ENCODE measurements at regions of chr2 and their contacts with region 1.

Region 1: DNA sequence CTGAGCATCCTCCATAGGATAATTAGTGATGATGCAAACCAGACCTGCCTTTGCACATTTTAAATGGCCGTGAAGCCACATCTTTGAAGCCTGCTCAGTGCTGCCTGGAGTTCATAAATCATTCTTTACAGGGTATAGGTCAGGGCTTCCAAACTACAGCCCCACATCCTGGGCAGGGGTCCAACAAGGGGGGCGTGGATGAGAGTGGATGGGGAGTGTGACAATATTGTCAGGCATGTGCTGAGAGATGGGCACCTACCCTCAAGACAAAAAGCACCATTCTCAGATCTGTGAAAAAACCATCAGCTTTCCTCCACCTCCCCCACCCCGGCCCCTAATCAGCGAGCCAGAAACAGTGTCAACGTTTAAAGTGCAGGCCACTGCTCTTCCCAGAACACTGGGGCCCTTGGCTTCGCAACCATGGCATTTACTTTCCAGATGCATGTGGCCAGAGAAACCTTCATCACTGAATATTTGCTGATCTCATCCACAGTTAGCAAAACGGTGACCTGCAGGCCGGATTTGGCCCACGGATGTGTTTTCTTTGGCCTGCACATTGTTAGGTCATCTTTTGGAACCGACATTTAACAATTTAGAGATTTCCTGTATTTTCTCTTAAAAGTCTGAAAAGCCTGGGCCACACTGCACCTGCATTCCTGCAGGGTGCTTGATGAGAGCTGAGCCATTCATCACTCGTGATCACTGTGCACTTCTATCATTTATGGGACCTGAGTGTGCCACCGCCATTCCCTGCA is 130.7 kb downstream of the ANKRD44 start:
- DNase-seq: no peak
- ATAC-seq: no peak
- H3K4me3 ChIP-seq: no peak overlapping the region
- H3K4me1 ChIP-seq: no peaks in the 10 kb centered on the region
- CTCF ChIP-seq: no peak

Region 2: DNA sequence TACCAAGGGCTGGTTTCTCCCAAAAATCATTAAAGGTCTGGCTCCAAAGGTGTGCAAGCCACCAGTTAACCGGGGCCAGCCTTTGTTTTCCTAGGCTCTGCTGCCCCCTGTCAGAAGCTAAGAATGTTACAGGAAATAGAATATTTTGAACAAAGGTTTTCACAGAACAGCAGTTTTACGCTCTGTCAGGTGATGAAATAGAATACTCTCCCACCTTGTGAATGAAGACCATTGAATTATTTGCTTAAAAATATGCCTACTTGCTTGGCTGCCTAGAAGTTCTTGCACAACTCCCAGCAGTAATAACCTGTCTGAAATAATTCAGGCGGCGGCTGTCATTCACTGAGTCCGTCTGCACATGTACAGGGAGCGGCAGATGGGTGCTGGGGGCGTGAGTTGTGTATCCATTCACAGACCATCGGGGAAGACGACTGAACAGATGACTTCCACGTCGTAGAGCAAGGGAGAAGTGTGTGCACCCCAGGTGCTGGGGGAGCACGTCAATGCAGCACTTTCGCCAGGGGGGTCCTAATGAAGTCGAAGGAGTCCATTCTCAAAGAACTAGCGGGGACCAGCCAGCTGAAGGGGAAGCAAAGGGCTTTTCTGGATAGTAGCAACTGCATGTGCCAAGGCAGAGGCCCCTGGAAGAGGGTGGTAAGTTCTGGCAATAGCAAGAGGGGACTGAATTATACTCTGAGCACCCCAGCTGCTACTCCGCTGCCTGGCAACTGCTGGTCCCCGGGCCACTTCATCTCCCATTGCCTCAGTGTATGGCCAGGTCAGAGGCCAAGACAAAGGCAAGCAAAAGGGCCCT is 198.8 kb after region 1 on chr2:
- intact Hi-C with region 1: loop called in 1 of 2 experiments (anchors 10 kb)
- DNase-seq: peak in 2 of 3 donors; percentile 42 to 60
- ATAC-seq: peak; percentile 81
- H3K4me3 ChIP-seq: no peak overlapping the region
- H3K4me1 ChIP-seq: peaks cover 3% of the 10 kb centered on the region
- CTCF ChIP-seq: no peak